Left ventricle myocardium superior (tissue), 1 donor: ENCODE measurements at regions of chr4 and their contacts with region 1.

Region 1: DNA sequence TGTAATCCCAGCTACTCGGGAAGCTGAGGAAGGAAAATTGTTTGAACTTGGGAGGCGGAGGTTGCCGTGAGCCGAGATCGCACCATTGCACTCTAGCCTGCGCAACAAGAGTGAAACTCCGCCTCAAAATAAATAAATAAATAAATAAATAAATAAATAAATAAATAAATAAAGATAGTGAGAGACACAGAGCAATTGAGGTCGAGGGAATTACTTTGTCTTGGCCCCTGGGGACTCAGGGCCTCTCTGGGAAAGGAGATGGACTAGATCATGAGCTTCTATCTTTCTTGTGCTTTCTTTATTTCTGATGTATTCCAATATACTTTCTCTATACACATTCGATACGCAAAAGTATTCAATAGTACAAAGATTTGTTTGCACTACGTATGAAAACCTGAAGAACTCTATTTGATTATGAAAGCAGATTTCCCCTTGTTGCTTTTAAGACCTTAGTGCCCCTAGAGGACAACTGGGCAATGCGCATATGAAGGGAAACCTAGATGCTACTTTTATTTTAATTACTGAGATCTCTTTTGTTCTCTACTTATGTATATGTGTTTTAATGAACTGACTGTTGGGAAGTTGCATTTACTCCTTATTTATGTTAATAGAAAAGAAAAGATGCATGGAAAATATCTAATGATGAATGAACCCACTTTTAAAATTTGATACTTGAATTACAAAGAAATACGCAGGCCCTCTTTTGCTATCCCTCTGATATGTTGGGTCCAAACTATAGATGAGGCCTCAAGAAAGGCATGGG is 12.8 kb upstream of the ELOVL6 start:
- DNase-seq: no peak
- ATAC-seq: peak; percentile 45

Region 2: DNA sequence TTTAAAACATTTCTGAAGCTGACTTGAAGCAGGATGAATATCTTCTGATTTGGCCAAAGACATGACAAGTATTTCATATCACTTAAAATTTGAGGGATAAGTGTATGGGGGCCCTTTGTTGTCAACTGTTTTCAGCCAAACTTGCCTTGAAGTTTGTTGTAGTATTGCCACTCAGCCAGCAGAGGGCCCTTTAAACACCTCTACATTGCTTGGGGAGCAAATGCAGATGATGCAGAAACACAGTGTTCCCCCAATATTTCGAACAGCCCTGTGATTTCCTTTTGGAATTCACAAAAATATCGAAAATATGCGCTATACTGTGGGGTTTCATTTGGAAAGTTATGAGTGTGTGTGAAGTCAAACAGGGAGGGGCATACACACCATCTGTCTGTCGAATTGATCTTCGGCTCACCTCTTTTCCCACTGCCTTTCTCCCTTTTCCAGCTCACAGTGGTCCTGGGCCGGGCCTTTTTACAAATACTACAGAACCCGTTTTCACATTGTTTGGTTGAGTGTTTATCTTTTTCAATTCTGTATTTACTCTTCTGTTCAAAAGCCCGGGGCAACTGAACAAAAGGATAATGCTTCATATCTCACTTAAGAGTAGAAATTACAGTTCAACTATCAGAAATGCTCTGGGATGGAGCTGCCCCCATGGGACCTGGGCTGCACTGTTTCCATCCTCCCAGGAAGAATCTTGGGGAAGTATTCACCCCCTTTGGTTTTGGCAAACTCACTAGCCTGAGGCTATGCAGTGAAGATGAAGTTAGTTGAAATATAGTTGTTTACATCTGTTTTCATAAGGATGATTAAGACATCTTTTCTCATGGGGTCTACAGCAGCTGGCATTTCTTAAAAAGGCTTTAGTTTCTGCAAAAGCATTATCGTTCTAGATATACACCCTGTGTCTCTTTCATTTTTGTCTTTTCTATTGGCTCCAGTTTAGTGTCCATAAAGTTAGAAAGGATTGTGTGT is 160.9 kb before region 1 on chr4:
- intact Hi-C with region 1: loop called (anchors 5 kb)
- DNase-seq: no peak
- ATAC-seq: no peak

Region 3: GRCh38 chr4:110236324-110236723 is 25.1 kb after region 1 on chr4:
- intact Hi-C with region 1: no loop called
- DNase-seq: no peak
- ATAC-seq: no peak